ENCODE measurements at regions of chr11 and their contacts with region 1.

Region 1: DNA sequence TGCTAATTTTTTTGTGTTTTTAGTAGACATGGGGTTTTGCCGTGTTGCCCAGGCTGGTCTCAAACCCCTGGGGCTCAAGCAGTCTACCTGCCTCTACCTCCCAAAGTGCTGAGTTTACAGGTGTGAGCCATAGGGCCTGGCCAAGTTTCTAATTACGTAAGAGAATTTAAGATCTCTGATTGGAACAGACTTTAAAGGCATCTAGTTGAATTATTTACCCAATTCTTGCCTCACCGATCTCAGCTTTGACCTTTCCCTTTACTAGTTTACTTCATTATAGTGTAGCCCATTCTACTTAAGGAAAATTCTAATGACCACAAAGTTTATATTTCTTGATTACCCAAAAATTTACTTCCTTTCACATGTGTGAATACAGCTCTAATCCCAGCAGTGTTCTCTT is 81.6 kb downstream of the YAP1 start:
- DNase-seq: no peak
- ATAC-seq: no peak
- H3K4me3 ChIP-seq: no peak overlapping the region
- H3K27ac ChIP-seq: no peak overlapping the region
- H3K4me1 ChIP-seq: peaks cover 10% of the 10 kb centered on the region; the same call in 1 of the 2 replicates
- H3K27me3 ChIP-seq: no peaks in the 10 kb centered on the region
- CTCF ChIP-seq: no peak

Region 2: GRCh38 chr11:102306048-102306585 is 114.3 kb after region 1 on chr11:
- CTCF ChIA-PET with region 1: interaction called, 20 read pairs
- POLR2A ChIA-PET with region 1: no interaction called
- in situ Hi-C with region 1: no loop called
- intact Hi-C with region 1: no loop called
- DNase-seq: no peak
- ATAC-seq: peak; percentile 90
- H3K4me3 ChIP-seq: peak overlapping the region; percentile 2 to 31; a peak in 3 of 4 replicates
- H3K27ac ChIP-seq: peak overlapping the region; percentile 93
- H3K4me1 ChIP-seq: peaks cover 38% of the 10 kb centered on the region
- H3K27me3 ChIP-seq: no peaks in the 10 kb centered on the region
- CTCF ChIP-seq: peak; percentile 69